GM12878 (cell line): ENCODE measurements at regions of chr11 and their contacts with region 1.

Region 1: GRCh38 chr11:128552783-128553661 is 34.3 kb downstream of the ETS1 start:
- DNase-seq: peak; percentile 95
- ATAC-seq: peak; percentile 79
- H3K4me3 ChIP-seq: peak overlapping the region; percentile 69
- H3K27ac ChIP-seq: peak overlapping the region; percentile 100
- H3K4me1 ChIP-seq: peaks cover 50% of the 10 kb centered on the region
- H3K27me3 ChIP-seq: no peaks in the 10 kb centered on the region
- CTCF ChIP-seq: no peak
- EP300 ChIP-seq: peak in 1 of 2 experiments; percentile 35; a peak in 2 of 4 replicates
- POLR2A ChIP-seq: peak; percentile 82
- RAD21 ChIP-seq: 0 out of 2 replicates have a peak, but pooled peaks have one; percentile 2

Region 2: DNA sequence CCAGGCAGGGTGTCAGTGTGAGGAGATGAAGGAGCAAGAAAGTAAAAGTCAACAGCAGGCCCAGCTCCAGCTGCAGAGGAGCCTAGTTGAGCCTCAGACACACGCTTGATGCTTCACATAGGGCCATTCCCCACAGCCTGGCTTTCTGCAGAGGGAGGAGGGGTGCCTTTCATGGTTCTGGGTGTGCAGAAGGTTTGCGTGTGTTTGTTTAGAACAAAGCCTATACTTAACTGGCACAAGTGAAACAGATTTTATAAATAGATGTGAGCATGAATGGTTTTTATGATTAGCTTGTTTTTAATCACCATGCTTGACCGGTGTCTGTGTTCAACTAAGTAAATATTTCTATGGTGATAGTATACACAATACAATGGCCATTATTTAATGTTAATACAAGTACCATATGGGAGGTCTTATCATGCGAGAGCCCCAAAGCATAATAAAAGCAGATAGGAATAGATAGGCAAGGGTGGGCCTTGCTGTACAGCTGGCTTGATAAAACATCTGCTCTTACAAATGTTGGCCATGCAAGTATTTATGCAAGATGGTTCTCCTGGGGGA is 255.9 kb before region 1 on chr11:
- CTCF ChIA-PET with region 1: interaction called, 48 read pairs
- POLR2A ChIA-PET with region 1: interaction called, 5 read pairs
- RAD21 ChIA-PET with region 1: interaction called, 53 read pairs
- SMC1A ChIA-PET with region 1: interaction called, 74 read pairs
- in situ Hi-C with region 1: no loop called
- intact Hi-C with region 1: loop called (anchors 1 kb)
- DNase-seq: no peak
- ATAC-seq: peak; percentile 22; the same call in 2 of the 3 replicates
- H3K4me3 ChIP-seq: no peak overlapping the region
- H3K27ac ChIP-seq: no peak overlapping the region
- H3K4me1 ChIP-seq: peaks cover 30% of the 10 kb centered on the region
- H3K27me3 ChIP-seq: no peaks in the 10 kb centered on the region
- CTCF ChIP-seq: no peak
- EP300 ChIP-seq: 0 out of 4 replicates have a peak, but pooled peaks of 1 of the 2 experiments have one; percentile 18
- POLR2A ChIP-seq: no peak
- RAD21 ChIP-seq: no peak

Region 3: GRCh38 chr11:128412847-128413791 is 139.9 kb before region 1 on chr11:
- CTCF ChIA-PET with region 1: interaction called, 9 read pairs
- POLR2A ChIA-PET with region 1: no interaction called
- RAD21 ChIA-PET with region 1: interaction called, 23 read pairs
- SMC1A ChIA-PET with region 1: interaction called, 9 read pairs
- in situ Hi-C with region 1: no loop called
- intact Hi-C with region 1: loop called (anchors 1 kb)
- DNase-seq: peak; percentile 82
- ATAC-seq: peak; percentile 76
- H3K4me3 ChIP-seq: peak overlapping the region; percentile 47; the same call in 1 of the 2 replicates
- H3K27ac ChIP-seq: peak overlapping the region; percentile 75
- H3K4me1 ChIP-seq: peaks cover 6% of the 10 kb centered on the region
- H3K27me3 ChIP-seq: no peaks in the 10 kb centered on the region
- CTCF ChIP-seq: no peak
- EP300 ChIP-seq: peak; percentile 45 to 76; a peak in 2 of 4 replicates
- POLR2A ChIP-seq: no peak
- RAD21 ChIP-seq: no peak

Region 4: GRCh38 chr11:128497061-128497775 is 55.8 kb before region 1 on chr11:
- CTCF ChIA-PET with region 1: interaction called, 4 read pairs
- POLR2A ChIA-PET with region 1: no interaction called
- RAD21 ChIA-PET with region 1: interaction called, 4 read pairs
- SMC1A ChIA-PET with region 1: interaction called, 20 read pairs
- in situ Hi-C with region 1: no loop called
- intact Hi-C with region 1: no loop called
- DNase-seq: peak; percentile 87
- ATAC-seq: peak; percentile 90
- H3K4me3 ChIP-seq: peak overlapping the region; percentile 47
- H3K27ac ChIP-seq: peak overlapping the region; percentile 88
- H3K4me1 ChIP-seq: peaks cover 72% of the 10 kb centered on the region
- H3K27me3 ChIP-seq: no peaks in the 10 kb centered on the region
- CTCF ChIP-seq: no peak
- EP300 ChIP-seq: peak in 1 of 2 experiments; percentile 56; a peak in 2 of 4 replicates
- POLR2A ChIP-seq: peak; percentile 53; the same call in 1 of the 2 replicates
- RAD21 ChIP-seq: 0 out of 2 replicates have a peak, but pooled peaks have one; percentile 4

Region 5: DNA sequence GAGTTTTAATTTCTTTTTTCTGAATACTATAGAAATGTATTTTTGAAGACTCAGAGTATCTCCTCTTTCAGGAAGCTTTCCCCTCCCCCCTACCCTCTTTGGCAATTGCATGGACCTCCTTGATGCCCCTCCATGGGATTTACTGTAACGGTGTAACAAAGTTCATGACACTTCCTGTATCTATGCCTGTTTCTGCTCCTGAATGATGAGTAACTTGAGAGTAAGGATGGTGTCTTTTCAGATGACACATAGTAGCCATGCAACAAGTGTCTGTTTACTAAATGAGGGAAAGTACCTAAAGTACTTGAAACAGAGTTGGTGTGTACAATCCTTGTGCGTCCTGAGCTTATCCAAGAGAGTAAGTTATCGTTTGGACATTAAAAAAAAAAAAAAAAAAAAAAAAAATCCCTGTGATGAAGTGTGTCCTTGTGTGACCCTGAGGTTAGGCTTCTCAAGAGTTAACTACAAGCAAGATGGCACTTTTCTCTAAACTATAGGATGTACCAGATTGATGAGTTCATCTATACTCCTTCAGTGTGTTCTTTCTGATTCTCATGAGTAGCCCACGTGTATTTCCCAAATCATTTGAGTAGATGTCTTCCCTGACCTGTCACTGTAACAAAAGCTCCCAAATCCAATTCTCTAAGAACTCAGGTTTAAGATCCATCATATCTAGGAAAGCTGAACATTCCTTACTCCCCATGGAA is 26.9 kb after region 1 on chr11:
- CTCF ChIA-PET with region 1: no interaction called
- POLR2A ChIA-PET with region 1: no interaction called
- RAD21 ChIA-PET with region 1: interaction called, 10 read pairs
- SMC1A ChIA-PET with region 1: interaction called, 18 read pairs
- in situ Hi-C with region 1: no loop called
- intact Hi-C with region 1: no loop called
- DNase-seq: no peak
- ATAC-seq: peak; percentile 86
- H3K4me3 ChIP-seq: no peak overlapping the region
- H3K27ac ChIP-seq: no peak overlapping the region
- H3K4me1 ChIP-seq: peaks cover 14% of the 10 kb centered on the region
- H3K27me3 ChIP-seq: no peaks in the 10 kb centered on the region
- CTCF ChIP-seq: no peak
- EP300 ChIP-seq: no peak
- POLR2A ChIP-seq: no peak
- RAD21 ChIP-seq: no peak

Region 6: DNA sequence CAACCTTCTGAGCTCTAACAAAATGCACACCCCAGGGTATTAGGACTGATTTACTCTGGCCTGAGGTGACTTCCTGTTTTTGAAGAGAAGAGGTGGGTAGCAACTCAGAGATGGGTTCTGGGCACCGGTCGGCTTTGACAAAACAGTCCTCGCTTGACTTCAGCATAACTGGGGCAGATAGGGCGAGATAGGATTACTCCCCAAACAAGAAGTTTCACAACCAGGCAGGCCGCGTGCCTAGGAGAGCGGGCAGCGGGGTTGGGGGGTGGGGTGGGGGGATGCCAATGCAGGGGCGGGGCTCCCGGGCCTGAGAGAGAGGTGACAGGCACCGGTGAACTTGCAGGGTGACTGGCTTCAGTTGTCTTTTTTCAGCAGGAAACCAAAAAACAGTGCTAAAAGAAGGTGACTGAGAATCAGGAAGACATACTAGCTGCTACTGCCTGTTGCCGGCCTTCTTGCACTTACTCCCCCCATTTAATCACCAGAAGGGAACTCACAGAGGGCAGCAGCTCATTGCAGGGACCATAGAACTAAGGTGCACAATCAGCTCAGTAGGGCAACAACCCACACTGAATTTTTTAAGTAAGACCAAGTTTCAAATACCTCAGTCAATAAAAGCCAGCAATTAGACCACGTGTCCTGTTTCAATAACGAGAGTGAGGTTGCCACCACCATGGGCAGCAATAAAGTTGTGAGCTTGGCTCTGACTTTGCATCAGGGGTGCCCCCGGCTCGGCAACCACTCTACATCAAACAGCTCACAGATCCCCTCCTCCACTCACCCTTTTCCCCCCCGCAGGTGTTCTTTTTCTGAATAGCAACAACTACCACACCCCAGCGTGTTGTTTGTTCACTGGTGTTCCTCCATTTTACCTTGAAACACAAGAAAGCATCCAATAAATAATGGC is 71.5 kb after region 1 on chr11:
- CTCF ChIA-PET with region 1: interaction called, 118 read pairs
- POLR2A ChIA-PET with region 1: interaction called, 30 read pairs
- RAD21 ChIA-PET with region 1: interaction called, 112 read pairs
- SMC1A ChIA-PET with region 1: interaction called, 186 read pairs
- in situ Hi-C with region 1: no loop called
- intact Hi-C with region 1: loop called (anchors 1 kb)
- DNase-seq: no peak
- ATAC-seq: peak; percentile 77
- H3K4me3 ChIP-seq: no peak overlapping the region
- H3K27ac ChIP-seq: peak overlapping the region; percentile 86
- H3K4me1 ChIP-seq: peaks cover 66% of the 10 kb centered on the region
- H3K27me3 ChIP-seq: no peaks in the 10 kb centered on the region
- CTCF ChIP-seq: no peak
- EP300 ChIP-seq: peak in 1 of 2 experiments; percentile 21; a peak in 1 of 4 replicates
- POLR2A ChIP-seq: no peak
- RAD21 ChIP-seq: no peak